Brain microvascular endothelial cell (primary cell): ENCODE measurements at regions of chr5 and their contacts with region 1.

Region 1: GRCh38 chr5:137344723-137345322 is 154.3 kb downstream of the SPOCK1 start:
- DNase-seq: peak; percentile 73
- H3K4me3 ChIP-seq: no peak overlapping the region
- H3K27ac ChIP-seq: no peak overlapping the region
- H3K27me3 ChIP-seq: no peaks in the 10 kb centered on the region
- CTCF ChIP-seq: peak; percentile 91

Region 2: GRCh38 chr5:137091472-137091871 is 253.4 kb before region 1 on chr5:
- in situ Hi-C with region 1: no loop called
- DNase-seq: no peak
- H3K4me3 ChIP-seq: no peak overlapping the region
- H3K27ac ChIP-seq: no peak overlapping the region
- H3K27me3 ChIP-seq: no peaks in the 10 kb centered on the region
- CTCF ChIP-seq: no peak

Region 3: GRCh38 chr5:137498736-137499505 is 154.1 kb after region 1 on chr5 and contains the start of gene SPOCK1:
- in situ Hi-C with region 1: loop called (anchors 10 kb)
- DNase-seq: peak; percentile 47
- H3K4me3 ChIP-seq: peak within 1 kb of the TSS; percentile 73
- H3K27ac ChIP-seq: no peak within 1 kb of the TSS
- H3K27me3 ChIP-seq: peaks cover 9% of the 10 kb centered on the region
- CTCF ChIP-seq: peak; percentile 53

Region 4: DNA sequence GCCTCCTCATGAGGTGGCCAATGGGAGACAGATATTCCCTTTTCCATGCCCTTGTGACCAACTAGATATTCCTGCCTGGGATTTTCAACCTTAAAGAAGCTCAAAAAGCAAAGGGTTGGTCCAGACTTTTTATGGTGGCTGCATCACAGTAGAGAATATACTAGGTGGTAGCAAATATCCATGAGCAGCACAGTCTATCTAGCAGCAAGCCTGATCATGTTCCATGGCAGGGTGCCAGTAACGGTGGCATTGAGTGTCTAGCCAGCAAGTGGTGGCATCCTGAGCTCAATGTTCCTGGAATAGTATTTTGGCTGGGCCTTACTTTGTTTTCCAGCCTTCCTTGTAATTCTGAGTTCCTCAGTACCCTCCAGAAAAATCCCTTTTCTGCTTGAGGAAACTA is 961.0 kb after region 1 on chr5:
- in situ Hi-C with region 1: no loop called
- DNase-seq: no peak
- H3K4me3 ChIP-seq: no peak overlapping the region
- H3K27ac ChIP-seq: no peak overlapping the region
- H3K27me3 ChIP-seq: no peaks in the 10 kb centered on the region
- CTCF ChIP-seq: no peak